Cardiac septum (tissue), 1 donor: ENCODE measurements at regions of chr1 and their contacts with region 1.

Region 1: DNA sequence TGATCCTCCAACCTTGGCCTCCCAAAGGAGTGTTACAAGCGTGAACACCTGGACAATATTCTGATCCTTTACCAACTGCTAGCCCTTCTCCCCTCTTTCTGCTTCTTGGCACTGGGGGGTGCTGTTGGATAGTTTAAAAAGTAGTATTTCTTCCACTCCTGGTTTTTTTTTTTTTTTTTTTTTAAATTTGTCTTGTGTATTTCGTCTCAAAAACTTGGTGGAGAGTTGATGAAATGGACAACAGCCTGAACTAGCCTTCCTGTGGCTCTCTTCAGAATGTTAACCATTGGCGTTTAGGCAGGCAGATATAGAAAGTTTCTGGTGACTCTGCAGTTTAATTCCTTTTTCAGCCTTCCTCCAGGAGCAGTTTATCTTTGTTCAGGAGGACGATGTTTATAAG is 69.7 kb upstream of the USP24 start:
- DNase-seq: no peak

Region 2: GRCh38 chr1:55337801-55338447 is 53.1 kb after region 1 on chr1:
- intact Hi-C with region 1: loop called (anchors 5 kb)
- DNase-seq: no peak

Region 3: GRCh38 chr1:56709269-56709880 is 1424.5 kb after region 1 on chr1:
- intact Hi-C with region 1: loop called (anchors 5 kb)
- DNase-seq: no peak